ENCODE measurements at regions of chr7 and their contacts with region 1.

Region 1: GRCh38 chr7:107168233-107169119 is at the start of gene HBP1:
- DNase-seq: peak; percentile 99
- H3K4me3 Mint-ChIP-seq: peak within 1 kb of the TSS; percentile 92
- H3K27ac Mint-ChIP-seq: peak within 1 kb of the TSS; percentile 98
- H3K4me1 Mint-ChIP-seq: peaks cover 26% of the 10 kb centered on the region
- H3K27me3 Mint-ChIP-seq: peaks cover 12% of the 10 kb centered on the region
- total RNA-seq, gene HBP1: 11.0 and 15.1 TPM in 2 replicates

Region 2: GRCh38 chr7:106346678-106347217 is 821.7 kb before region 1 on chr7:
- intact Hi-C with region 1: loop called (anchors 2 kb)
- DNase-seq: peak; percentile 93
- H3K4me3 Mint-ChIP-seq: peak overlapping the region; percentile 72
- H3K27ac Mint-ChIP-seq: peak overlapping the region; percentile 99
- H3K4me1 Mint-ChIP-seq: peaks cover 48% of the 10 kb centered on the region
- H3K27me3 Mint-ChIP-seq: no peaks in the 10 kb centered on the region

Region 3: DNA sequence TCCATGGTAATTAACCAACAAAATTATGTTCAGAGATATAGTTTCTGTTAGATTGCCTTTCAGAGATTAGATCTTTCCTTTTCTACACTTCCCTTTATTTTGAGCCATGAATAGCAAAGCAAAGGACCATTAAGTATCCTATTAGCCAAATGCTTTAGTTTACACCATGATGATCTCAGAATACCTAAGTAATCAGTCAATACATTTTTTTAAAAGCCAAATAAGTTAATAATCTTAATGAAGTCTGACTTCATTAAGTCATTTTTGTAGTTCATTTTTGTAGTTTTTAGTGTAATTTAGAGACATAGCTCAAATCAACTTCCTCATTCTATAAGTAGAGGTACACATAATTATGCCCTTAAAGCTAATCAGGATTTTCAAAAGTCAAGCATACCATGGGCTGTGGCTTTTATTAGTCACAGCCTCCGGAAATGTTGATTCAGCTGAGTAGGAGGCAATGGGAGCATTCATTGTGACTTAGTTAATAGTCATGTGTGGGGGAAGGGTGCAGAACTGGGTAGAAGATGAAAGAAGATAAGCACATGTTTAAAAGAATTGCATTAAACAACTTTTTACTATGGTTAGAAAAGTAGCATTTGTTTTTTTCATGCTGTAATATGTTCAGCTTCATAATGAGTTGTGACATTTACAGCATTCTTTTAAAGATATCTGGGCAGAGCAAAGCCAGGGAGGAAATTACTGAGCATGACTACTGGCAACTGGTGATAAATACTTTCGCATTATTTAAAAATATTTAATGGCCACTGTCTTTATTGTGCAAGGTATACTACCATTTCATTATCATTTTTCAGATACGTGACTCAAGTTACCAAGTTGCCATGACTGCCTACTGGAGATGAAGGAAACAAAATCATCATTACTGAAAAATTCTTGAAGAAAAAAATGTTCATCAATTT is 450.3 kb before region 1 on chr7:
- intact Hi-C with region 1: loop called (anchors 5 kb)
- DNase-seq: peak; percentile 85
- H3K4me3 Mint-ChIP-seq: no peak overlapping the region
- H3K27ac Mint-ChIP-seq: no peak overlapping the region
- H3K4me1 Mint-ChIP-seq: peaks cover 22% of the 10 kb centered on the region
- H3K27me3 Mint-ChIP-seq: no peaks in the 10 kb centered on the region

Region 4: GRCh38 chr7:107130487-107131225 is 37.8 kb before region 1 on chr7:
- intact Hi-C with region 1: loop called (anchors 1 kb)
- DNase-seq: no peak
- H3K4me3 Mint-ChIP-seq: no peak overlapping the region
- H3K27ac Mint-ChIP-seq: no peak overlapping the region
- H3K4me1 Mint-ChIP-seq: peaks cover 13% of the 10 kb centered on the region
- H3K27me3 Mint-ChIP-seq: peaks cover 8% of the 10 kb centered on the region

Region 5: DNA sequence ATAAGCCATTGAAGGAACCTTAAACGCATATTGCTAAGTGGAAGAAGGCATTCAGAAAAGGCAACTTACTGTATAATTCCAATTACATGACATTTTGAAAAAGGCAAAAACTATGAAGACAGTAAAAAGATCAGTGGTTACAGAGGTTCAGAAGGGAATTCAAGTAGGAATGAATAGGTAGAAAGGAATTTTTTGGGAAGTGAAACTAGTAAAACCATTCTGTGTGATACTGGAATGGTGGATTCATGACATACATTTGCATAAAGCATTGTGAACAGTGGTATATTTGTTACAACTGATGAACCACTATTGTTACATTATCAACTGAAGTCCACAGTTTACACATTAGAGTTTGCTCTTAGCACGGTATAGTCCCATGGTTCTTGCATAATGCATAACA is 187.1 kb after region 1 on chr7:
- intact Hi-C with region 1: no loop called
- DNase-seq: no peak
- H3K4me3 Mint-ChIP-seq: no peak overlapping the region
- H3K27ac Mint-ChIP-seq: no peak overlapping the region
- H3K4me1 Mint-ChIP-seq: no peaks in the 10 kb centered on the region
- H3K27me3 Mint-ChIP-seq: no peaks in the 10 kb centered on the region

Region 6: DNA sequence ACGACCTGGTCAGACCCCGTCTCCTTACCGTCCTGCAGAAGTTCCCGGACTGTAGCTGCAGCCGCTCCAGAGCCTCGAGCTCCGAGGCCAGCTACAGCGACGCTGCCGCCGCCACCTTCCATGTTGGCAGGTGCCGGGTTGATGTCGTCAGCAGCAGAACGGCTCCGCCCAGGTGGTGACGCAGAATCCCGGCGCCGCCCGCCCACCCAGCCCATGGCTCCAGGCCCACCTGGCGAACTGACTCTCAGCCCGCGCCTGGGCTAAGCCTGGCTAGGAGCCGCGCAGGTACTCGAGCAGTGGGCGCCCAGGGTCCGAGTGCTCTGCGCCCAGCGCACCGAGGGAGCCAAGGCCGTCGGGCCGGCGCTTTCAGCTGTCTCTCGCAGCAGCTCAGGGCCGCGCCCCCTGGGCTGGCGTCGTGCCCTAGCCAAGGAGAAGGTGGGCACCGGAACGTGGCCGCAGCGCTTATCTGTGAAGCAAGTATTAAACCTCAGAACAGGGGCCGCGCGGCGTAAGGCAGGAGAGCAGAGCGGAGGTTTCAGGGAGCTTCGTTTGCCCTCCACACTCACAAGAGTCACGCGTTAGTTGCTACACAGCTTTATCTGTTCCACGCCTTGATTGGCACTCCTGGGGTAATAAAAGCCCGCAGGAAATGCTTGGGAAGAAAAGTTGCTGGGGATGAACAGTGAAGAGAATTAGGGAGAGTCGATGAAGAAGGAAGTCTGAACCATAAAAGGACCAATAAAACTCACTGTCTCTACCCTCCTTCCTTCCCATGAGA is 395.5 kb after region 1 on chr7 and contains the starts of genes COG5 and DUS4L:
- intact Hi-C with region 1: loop called (anchors 1 kb)
- DNase-seq: peak; percentile 95
- H3K4me3 Mint-ChIP-seq: peak within 1 kb of the TSS; percentile 85
- H3K27ac Mint-ChIP-seq: peak within 1 kb of the TSS; percentile 85
- H3K4me1 Mint-ChIP-seq: peaks cover 50% of the 10 kb centered on the region
- H3K27me3 Mint-ChIP-seq: no peaks in the 10 kb centered on the region
- total RNA-seq, gene COG5: 40.9 and 43.3 TPM in 2 replicates
- total RNA-seq, gene DUS4L: 12.9 and 14.9 TPM in 2 replicates

Region 7: DNA sequence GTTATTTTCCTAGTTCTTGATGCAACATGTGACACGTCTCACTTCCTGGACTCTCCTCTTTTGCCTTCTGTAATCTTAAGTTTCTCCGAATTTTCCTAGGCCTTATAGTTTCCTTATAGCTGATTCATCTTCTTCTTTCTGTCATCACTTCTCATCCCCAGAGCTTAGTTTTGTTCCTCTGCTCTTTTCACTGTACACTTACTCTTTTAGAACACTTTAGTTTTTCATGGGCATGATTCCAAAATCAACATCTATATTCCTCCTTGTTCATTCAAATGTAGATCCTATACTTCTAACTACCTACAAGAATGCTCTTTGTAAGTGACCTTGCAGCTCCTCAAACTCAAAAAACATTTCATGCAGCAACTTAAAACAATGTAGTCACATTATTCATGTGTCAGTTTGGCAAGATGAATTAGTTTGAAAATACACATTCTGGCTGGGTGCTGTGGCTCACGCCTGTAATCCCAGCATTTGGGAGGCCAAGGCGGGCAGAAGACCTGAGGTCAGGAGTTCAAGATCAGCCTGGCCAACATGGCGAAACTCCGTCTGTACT is 647.6 kb after region 1 on chr7:
- intact Hi-C with region 1: loop called (anchors 10 kb)
- DNase-seq: no peak
- H3K4me3 Mint-ChIP-seq: peak overlapping the region; percentile 23
- H3K27ac Mint-ChIP-seq: peak overlapping the region; percentile 84
- H3K4me1 Mint-ChIP-seq: peaks cover 23% of the 10 kb centered on the region
- H3K27me3 Mint-ChIP-seq: peaks cover 3% of the 10 kb centered on the region

Measured in activated CD4-positive, alpha-beta T cell treated with anti-CD3 and anti-CD28 coated beads, Interleukin-2, amount 10 ng/mL, durations not matched to agents 24 days and 14 days (primary cell).